ENCODE measurements at regions of chr14 and their contacts with region 1.

Region 1: DNA sequence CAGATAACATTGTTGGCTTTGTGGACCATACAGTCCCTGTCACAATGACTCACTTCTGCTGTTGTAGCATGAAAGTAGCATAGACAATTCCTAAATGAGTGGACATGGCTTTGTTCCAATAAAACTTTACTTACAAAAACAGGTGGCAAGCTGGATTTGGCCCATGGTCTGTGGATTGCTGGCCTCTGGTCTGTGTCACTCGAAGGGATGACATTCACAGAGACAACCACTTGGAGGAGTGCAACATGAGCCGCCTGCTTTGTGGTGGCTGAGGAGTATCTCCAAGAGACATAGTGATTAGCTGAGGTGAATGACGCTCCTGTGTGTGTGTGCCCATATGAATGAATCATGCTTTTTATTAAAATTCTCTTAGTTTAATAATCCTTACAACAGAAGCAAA is 81.3 kb upstream of the NRXN3 start:
- DNase-seq: no peak
- ATAC-seq: no peak
- H3K4me3 ChIP-seq: no peak overlapping the region
- H3K4me3 Mint-ChIP-seq: no peak overlapping the region
- H3K27ac ChIP-seq: no peak overlapping the region
- H3K27ac Mint-ChIP-seq: no peak overlapping the region
- H3K4me1 ChIP-seq: no peaks in the 10 kb centered on the region
- H3K4me1 Mint-ChIP-seq: no peaks in the 10 kb centered on the region
- H3K27me3 ChIP-seq: peaks cover 0 to 30% of the 10 kb centered on the region in 2 experiments
- H3K27me3 Mint-ChIP-seq: peaks cover 8 to 23% of the 10 kb centered on the region in 2 donors

Region 2: GRCh38 chr14:77478796-77479195 is 610.1 kb before region 1 on chr14:
- CTCF ChIA-PET with region 1: no interaction called
- POLR2A ChIA-PET with region 1: no interaction called
- DNase-seq: no peak
- ATAC-seq: no peak
- H3K4me3 ChIP-seq: no peak overlapping the region
- H3K4me3 Mint-ChIP-seq: no peak overlapping the region
- H3K27ac ChIP-seq: no peak overlapping the region
- H3K27ac Mint-ChIP-seq: no peak overlapping the region
- H3K4me1 ChIP-seq: no peaks in the 10 kb centered on the region
- H3K4me1 Mint-ChIP-seq: no peaks in the 10 kb centered on the region
- H3K27me3 ChIP-seq: peaks cover 0 to 10% of the 10 kb centered on the region in 2 experiments
- H3K27me3 Mint-ChIP-seq: no peaks in the 10 kb centered on the region

Region 3: DNA sequence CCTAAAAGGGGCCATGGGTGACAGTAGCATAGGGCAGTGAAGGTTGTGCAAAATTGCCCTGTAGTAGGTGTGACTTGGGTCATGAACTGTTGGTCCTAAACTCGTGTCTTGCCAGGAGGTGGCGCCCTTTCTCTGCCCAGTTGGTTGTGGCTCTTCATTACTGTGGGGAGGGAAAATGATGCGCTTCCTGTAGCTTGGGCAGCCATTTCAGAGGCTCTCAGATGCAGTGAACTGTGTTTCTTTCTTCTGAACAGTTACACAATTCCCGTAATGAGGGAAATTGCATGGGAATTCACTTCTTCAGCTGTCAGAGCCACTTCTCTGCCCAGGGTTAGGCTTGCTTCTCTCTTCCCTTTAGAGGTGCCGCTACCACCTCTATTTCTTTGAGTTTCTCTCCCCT is 66.9 kb before region 1 on chr14:
- CTCF ChIA-PET with region 1: no interaction called
- POLR2A ChIA-PET with region 1: no interaction called
- DNase-seq: peak in 17 of 35 experiments; percentile 0 to 27 (median 5)
- ATAC-seq: no peak
- H3K4me3 ChIP-seq: no peak overlapping the region
- H3K4me3 Mint-ChIP-seq: no peak overlapping the region
- H3K27ac ChIP-seq: no peak overlapping the region
- H3K27ac Mint-ChIP-seq: no peak overlapping the region
- H3K4me1 ChIP-seq: no peaks in the 10 kb centered on the region
- H3K4me1 Mint-ChIP-seq: no peaks in the 10 kb centered on the region
- H3K27me3 ChIP-seq: peaks cover 0 to 5% of the 10 kb centered on the region in 2 experiments
- H3K27me3 Mint-ChIP-seq: peaks cover 3 to 23% of the 10 kb centered on the region in 2 donors

Region 4: GRCh38 chr14:78530078-78530477 is 441.2 kb after region 1 on chr14:
- CTCF ChIA-PET with region 1: no interaction called
- POLR2A ChIA-PET with region 1: interaction called in 1 of 2 experiments, 10 read pairs
- DNase-seq: peak in 1 of 35 experiments; percentile 1
- ATAC-seq: no peak
- H3K4me3 ChIP-seq: no peak overlapping the region
- H3K4me3 Mint-ChIP-seq: no peak overlapping the region
- H3K27ac ChIP-seq: no peak overlapping the region
- H3K27ac Mint-ChIP-seq: no peak overlapping the region
- H3K4me1 ChIP-seq: no peaks in the 10 kb centered on the region
- H3K4me1 Mint-ChIP-seq: no peaks in the 10 kb centered on the region
- H3K27me3 ChIP-seq: no peaks in the 10 kb centered on the region
- H3K27me3 Mint-ChIP-seq: no peaks in the 10 kb centered on the region

Measured in T-cell (primary cell).